ENCODE measurements at regions of chr4 and their contacts with region 1.

Region 1: GRCh38 chr4:5963611-5964010 is 54.6 kb downstream of the C4orf50 start:
- DNase-seq: peak; percentile 40
- ATAC-seq: peak; percentile 71
- H3K4me3 Mint-ChIP-seq: no peak overlapping the region
- H3K27ac Mint-ChIP-seq: no peak overlapping the region
- H3K4me1 Mint-ChIP-seq: peaks cover 5% of the 10 kb centered on the region
- H3K27me3 Mint-ChIP-seq: peaks cover 20% of the 10 kb centered on the region
- CTCF ChIP-seq: no peak

Region 2: DNA sequence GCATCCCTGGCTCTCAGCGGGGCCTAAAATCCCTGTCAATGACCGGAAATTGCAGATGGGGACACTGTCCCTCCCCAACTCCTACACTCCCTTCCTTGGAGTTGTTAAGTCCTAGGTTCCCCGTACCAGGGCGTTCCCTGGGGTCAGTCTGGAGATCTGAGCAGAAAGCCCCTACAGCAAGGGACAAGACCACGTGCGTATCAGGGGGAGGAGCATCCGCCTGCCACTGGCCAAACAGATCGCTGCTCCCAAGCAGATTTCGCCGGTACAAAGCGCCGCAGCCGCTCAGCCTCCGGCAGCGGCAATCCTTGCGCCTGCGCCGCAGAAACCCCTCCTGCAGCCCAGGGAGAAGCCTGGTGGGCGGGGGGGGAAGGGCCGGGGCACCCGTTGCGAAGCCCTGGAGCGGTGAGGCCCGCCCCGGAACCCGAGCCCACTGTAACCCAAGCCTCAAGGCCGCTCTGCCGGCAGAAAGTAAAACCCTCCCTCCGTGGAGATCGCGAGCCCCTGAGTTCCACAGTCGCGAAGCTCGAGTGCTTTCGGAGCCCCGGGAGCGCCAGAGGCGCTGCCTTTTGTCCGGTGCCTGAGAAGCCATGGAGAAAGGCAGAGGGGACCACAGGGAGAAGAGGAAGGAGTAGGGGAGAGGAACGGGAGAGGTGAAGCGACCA is 73.4 kb before region 1 on chr4:
- CTCF ChIA-PET with region 1: interaction called, 13 read pairs
- POLR2A ChIA-PET with region 1: no interaction called
- DNase-seq: peak; percentile 93
- ATAC-seq: peak; percentile 60
- H3K4me3 Mint-ChIP-seq: peak overlapping the region; percentile 73
- H3K27ac Mint-ChIP-seq: peak overlapping the region; percentile 99
- H3K4me1 Mint-ChIP-seq: peaks cover 55% of the 10 kb centered on the region
- H3K27me3 Mint-ChIP-seq: peaks cover 57% of the 10 kb centered on the region
- CTCF ChIP-seq: no peak

Region 3: DNA sequence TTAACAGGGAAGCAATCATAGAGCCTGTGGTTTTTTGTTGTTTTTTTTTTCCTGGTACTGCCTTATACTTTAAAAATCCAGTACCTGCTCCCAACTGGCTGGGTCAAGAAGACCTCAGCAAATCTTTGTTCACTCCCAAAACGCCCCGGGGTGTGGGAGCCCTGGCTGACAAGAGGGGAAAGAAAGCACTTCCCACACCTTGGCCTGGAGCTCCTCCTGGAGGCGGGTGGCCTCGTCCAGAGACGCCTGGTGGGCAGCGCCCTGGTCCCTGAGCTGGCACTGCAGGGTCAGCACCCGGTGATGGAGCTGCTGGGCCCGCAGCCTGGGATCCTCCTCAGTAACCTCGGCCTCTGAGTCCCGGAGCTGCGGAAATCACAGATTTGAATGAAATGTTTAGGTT is 16.4 kb after region 1 on chr4:
- CTCF ChIA-PET with region 1: interaction called, 11 read pairs
- POLR2A ChIA-PET with region 1: no interaction called
- DNase-seq: peak; percentile 85
- ATAC-seq: peak; percentile 96
- H3K4me3 Mint-ChIP-seq: no peak overlapping the region
- H3K27ac Mint-ChIP-seq: no peak overlapping the region
- H3K4me1 Mint-ChIP-seq: peaks cover 2% of the 10 kb centered on the region; the same call in 1 of the 2 replicates
- H3K27me3 Mint-ChIP-seq: peaks cover 13% of the 10 kb centered on the region
- CTCF ChIP-seq: no peak

Region 4: DNA sequence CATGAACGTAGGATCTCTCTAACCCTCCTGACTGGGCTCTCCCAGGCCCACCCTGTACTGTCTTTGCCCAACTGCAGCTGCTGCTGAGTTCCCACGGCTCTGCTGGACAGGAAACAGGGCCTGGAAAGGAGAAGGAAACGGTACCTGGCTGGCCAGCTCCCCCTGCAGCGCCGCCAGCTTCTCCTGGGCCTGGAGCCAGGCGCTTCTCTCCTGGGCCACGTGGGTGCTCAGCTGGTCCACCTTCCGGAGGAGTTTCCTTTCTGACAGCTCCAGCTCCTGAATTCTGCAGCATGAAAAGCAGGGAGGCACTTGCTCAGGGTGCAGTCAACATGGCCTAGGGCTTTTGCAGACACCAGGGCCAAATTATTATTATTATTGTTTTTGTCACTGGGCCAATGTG is 48.1 kb after region 1 on chr4:
- CTCF ChIA-PET with region 1: no interaction called
- POLR2A ChIA-PET with region 1: no interaction called
- DNase-seq: no peak
- ATAC-seq: no peak
- H3K4me3 Mint-ChIP-seq: no peak overlapping the region
- H3K27ac Mint-ChIP-seq: no peak overlapping the region
- H3K4me1 Mint-ChIP-seq: peaks cover 14% of the 10 kb centered on the region
- H3K27me3 Mint-ChIP-seq: peaks cover 29% of the 10 kb centered on the region
- CTCF ChIP-seq: no peak

Region 5: GRCh38 chr4:6221851-6222760 is 258.5 kb after region 1 on chr4:
- CTCF ChIA-PET with region 1: no interaction called
- POLR2A ChIA-PET with region 1: no interaction called
- DNase-seq: peak; percentile 80
- ATAC-seq: peak; percentile 83
- H3K4me3 Mint-ChIP-seq: peak overlapping the region; percentile 85
- H3K27ac Mint-ChIP-seq: no peak overlapping the region
- H3K4me1 Mint-ChIP-seq: peaks cover 2% of the 10 kb centered on the region; the same call in 1 of the 2 replicates
- H3K27me3 Mint-ChIP-seq: peaks cover 45% of the 10 kb centered on the region
- CTCF ChIP-seq: no peak